ENCODE measurements at regions of chr6 and their contacts with region 1.

Region 1: GRCh38 chr6:51792273-51793030 is 295.0 kb downstream of the PKHD1 start:
- DNase-seq: peak; percentile 1
- H3K4me3 ChIP-seq: no peak overlapping the region
- H3K27ac ChIP-seq: no peak overlapping the region
- H3K4me1 ChIP-seq: no peaks in the 10 kb centered on the region
- H3K27me3 ChIP-seq: no peaks in the 10 kb centered on the region
- CTCF ChIP-seq: no peak

Region 2: GRCh38 chr6:51167468-51167867 is 625.0 kb before region 1 on chr6:
- CTCF ChIA-PET with region 1: no interaction called
- POLR2A ChIA-PET with region 1: no interaction called
- intact Hi-C with region 1: loop called (anchors 5 kb)
- DNase-seq: no peak
- H3K4me3 ChIP-seq: no peak overlapping the region
- H3K27ac ChIP-seq: no peak overlapping the region
- H3K4me1 ChIP-seq: no peaks in the 10 kb centered on the region
- H3K27me3 ChIP-seq: no peaks in the 10 kb centered on the region
- CTCF ChIP-seq: no peak

Region 3: GRCh38 chr6:51914903-51915497 is 122.5 kb after region 1 on chr6:
- CTCF ChIA-PET with region 1: no interaction called
- POLR2A ChIA-PET with region 1: no interaction called
- intact Hi-C with region 1: no loop called
- DNase-seq: no peak
- H3K4me3 ChIP-seq: no peak overlapping the region
- H3K27ac ChIP-seq: no peak overlapping the region
- H3K4me1 ChIP-seq: no peaks in the 10 kb centered on the region
- H3K27me3 ChIP-seq: peaks cover 11% of the 10 kb centered on the region
- CTCF ChIP-seq: no peak

Region 4: DNA sequence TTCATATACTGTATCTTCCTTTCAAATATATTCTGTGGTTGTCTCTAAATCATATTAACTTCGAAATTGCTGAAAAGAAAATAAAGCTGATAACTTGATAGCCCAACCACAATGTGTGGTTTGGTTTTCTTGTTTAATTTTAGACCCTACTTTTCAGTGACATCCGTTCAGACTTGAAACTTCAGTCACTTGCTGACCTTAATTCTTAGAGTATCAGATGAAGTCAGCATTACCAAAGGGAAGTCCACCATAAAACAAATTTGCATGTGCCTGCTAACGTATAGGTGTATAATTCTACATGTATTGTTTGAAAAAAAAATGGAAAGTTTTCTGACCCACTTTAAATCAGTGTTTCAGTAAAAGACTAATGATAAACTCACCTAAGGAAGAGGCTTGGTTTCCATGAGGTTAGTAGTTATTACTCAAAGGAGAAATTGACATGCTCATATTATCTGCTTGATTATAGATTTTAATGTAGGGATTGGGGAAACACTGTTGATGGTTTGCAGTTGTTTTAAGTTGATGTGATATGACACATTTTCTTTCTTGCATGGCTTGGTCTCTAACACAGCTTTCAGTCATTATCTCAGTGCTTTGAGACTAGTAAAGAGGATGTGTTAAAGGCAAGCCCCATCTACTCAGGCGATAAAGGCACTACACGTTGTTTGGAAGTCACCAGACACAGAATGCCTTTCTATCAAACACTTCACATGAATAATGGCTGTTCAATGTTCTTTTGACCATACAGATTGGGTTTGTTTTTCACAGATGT is 388.5 kb after region 1 on chr6:
- CTCF ChIA-PET with region 1: no interaction called
- POLR2A ChIA-PET with region 1: no interaction called
- intact Hi-C with region 1: no loop called
- DNase-seq: no peak
- H3K4me3 ChIP-seq: no peak overlapping the region
- H3K27ac ChIP-seq: no peak overlapping the region
- H3K4me1 ChIP-seq: no peaks in the 10 kb centered on the region
- H3K27me3 ChIP-seq: no peaks in the 10 kb centered on the region
- CTCF ChIP-seq: no peak

Region 5: GRCh38 chr6:52317841-52318581 is 525.6 kb after region 1 on chr6:
- CTCF ChIA-PET with region 1: no interaction called
- POLR2A ChIA-PET with region 1: no interaction called
- intact Hi-C with region 1: no loop called
- DNase-seq: no peak
- H3K4me3 ChIP-seq: no peak overlapping the region
- H3K27ac ChIP-seq: no peak overlapping the region
- H3K4me1 ChIP-seq: no peaks in the 10 kb centered on the region
- H3K27me3 ChIP-seq: no peaks in the 10 kb centered on the region
- CTCF ChIP-seq: no peak

Measured in A673 (cell line).